ENCODE measurements at regions of chr2 and their contacts with region 1.

Region 1: DNA sequence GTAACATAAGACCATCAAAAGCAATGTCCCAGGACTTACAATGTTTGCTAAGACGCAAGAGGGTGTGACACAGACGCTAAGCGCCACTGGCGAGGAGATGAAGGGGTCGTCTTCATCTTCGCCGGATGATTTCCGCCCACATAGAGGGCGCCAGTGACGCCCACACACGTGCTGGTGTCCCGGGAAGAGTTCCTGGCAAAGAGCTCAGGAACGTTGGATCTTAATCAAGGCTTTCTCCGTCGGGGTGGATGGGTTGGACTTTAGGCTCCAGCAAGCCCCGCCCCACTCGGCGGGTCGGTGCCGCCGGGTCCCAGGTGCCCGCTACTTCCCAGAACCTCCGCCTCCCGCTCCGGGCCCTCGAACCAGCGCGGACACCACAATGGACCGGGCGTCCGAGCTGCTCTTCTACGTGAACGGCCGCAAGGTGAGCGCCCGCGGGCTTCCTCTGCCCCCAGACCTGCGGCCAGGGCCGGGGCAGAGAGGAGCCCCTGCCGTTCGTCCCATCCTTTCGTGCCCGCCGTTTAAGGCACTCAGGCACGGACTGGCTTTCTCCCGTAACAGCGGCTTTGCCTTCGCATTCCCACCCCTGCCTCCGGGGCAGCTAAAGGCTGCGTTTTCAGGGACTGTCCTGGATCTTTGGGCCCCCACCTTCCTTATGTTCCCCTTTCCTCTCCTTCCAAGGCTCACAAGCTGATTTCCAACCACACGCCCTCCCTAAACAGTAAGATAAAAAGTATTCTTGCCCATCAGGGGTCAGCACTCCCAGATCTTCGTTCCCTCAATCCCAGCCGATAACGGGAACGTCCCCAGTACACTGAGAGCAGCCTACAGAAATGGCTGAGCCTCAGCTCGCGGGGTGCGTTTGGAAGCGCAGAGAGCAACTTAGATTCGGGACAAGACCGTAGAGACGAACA is at the start of gene AOX1:
- DNase-seq: peak; percentile 70
- ATAC-seq: peak; percentile 93
- H3K4me3 ChIP-seq: peak within 1 kb of the TSS; percentile 56 to 76 (median 57)
- H3K27ac ChIP-seq: peak within 1 kb of the TSS; percentile 39
- H3K4me1 ChIP-seq: peaks cover 37% of the 10 kb centered on the region
- H3K27me3 ChIP-seq: no peaks in the 10 kb centered on the region; a peak in 1 of 5 replicates
- CTCF ChIP-seq: peak; percentile 71
- EP300 ChIP-seq: no peak
- POLR2A ChIP-seq: peak; percentile 51 to 60
- RAD21 ChIP-seq: peak; percentile 73
- total RNA-seq, gene AOX1: 18.0 and 27.5 TPM in 2 replicates

Region 2: DNA sequence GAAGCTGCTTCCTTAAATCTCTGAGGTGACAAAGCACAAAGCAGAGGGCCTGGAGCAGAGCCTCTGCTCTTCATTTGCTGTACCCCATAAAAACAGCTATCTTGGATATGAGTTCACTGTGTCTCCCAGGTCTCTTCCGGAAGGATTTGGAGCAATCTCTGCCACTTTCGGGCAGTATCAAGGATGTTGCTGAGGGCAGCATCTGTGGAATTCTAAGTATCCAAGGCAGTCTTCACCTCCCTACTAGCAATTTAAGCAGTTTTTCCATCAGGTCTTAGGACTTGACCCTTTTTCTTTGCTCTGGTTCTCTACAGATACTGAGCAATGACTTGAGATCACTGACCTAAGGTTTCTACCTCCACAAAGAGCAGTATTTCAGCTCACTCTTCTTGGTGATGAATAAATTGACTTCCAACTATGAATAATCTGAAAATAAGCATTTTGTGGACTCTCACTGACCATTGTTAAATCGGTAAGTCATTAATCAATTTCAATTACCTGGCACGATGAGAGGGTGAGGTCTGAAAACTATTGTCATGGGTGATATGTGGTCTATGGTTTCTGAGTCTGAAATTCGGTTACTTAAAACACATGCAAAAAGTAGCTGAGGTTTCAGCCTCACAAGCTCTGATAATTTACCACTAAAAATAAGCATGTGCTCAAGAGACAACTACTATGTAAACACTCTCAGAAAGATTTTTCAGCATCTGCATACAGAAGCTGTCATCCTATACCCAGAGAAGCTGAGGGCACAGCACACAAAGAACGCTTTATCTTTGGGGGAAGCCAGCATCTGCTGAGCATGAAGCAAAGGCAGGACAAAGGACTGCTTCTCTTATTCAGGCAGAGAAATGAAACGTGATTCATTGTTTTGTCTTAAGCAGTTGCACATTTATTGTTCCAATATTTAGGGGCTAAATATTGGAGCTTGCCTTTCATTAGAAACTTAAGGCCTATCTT is 311.6 kb before region 1 on chr2:
- CTCF ChIA-PET with region 1: no interaction called
- POLR2A ChIA-PET with region 1: no interaction called
- in situ Hi-C with region 1: no loop called
- intact Hi-C with region 1: no loop called
- DNase-seq: peak; percentile 81
- ATAC-seq: peak; percentile 96
- H3K4me3 ChIP-seq: no peak overlapping the region
- H3K27ac ChIP-seq: no peak overlapping the region
- H3K4me1 ChIP-seq: peaks cover 46% of the 10 kb centered on the region
- H3K27me3 ChIP-seq: peaks cover 0 to 2% of the 10 kb centered on the region in 2 experiments; a peak in 1 of 5 replicates
- CTCF ChIP-seq: no peak
- EP300 ChIP-seq: peak in 1 of 2 experiments; percentile 30; a peak in 1 of 4 replicates
- POLR2A ChIP-seq: no peak
- RAD21 ChIP-seq: no peak

Region 3: GRCh38 chr2:200603982-200604381 is 18.0 kb after region 1 on chr2:
- CTCF ChIA-PET with region 1: no interaction called
- POLR2A ChIA-PET with region 1: interaction called, 73 read pairs
- in situ Hi-C with region 1: no loop called
- intact Hi-C with region 1: loop called (anchors 2 kb)
- DNase-seq: peak; percentile 90
- ATAC-seq: peak; percentile 95
- H3K4me3 ChIP-seq: no peak overlapping the region
- H3K27ac ChIP-seq: peak overlapping the region; percentile 53
- H3K4me1 ChIP-seq: peaks cover 21% of the 10 kb centered on the region
- H3K27me3 ChIP-seq: no peaks in the 10 kb centered on the region
- CTCF ChIP-seq: no peak
- EP300 ChIP-seq: peak; percentile 50 to 68; a peak in 3 of 4 replicates
- POLR2A ChIP-seq: no peak
- RAD21 ChIP-seq: no peak

Region 4: GRCh38 chr2:200624658-200625057 is 38.7 kb after region 1 on chr2:
- CTCF ChIA-PET with region 1: no interaction called
- POLR2A ChIA-PET with region 1: interaction called, 6 read pairs
- in situ Hi-C with region 1: no loop called
- intact Hi-C with region 1: loop called (anchors 5 kb)
- DNase-seq: peak; percentile 24
- ATAC-seq: no peak
- H3K4me3 ChIP-seq: no peak overlapping the region
- H3K27ac ChIP-seq: no peak overlapping the region
- H3K4me1 ChIP-seq: peaks cover 11% of the 10 kb centered on the region
- H3K27me3 ChIP-seq: no peaks in the 10 kb centered on the region
- CTCF ChIP-seq: no peak
- EP300 ChIP-seq: no peak
- POLR2A ChIP-seq: no peak
- RAD21 ChIP-seq: no peak

Region 5: GRCh38 chr2:200658278-200658864 is 72.4 kb after region 1 on chr2:
- CTCF ChIA-PET with region 1: no interaction called
- POLR2A ChIA-PET with region 1: interaction called, 5 read pairs
- in situ Hi-C with region 1: loop called (anchors 5 kb)
- intact Hi-C with region 1: no loop called
- DNase-seq: no peak
- ATAC-seq: 0 out of 3 replicates have a peak, but pooled peaks have one; percentile 38
- H3K4me3 ChIP-seq: no peak overlapping the region
- H3K27ac ChIP-seq: no peak overlapping the region
- H3K4me1 ChIP-seq: peaks cover 2% of the 10 kb centered on the region
- H3K27me3 ChIP-seq: no peaks in the 10 kb centered on the region
- CTCF ChIP-seq: peak; percentile 53
- EP300 ChIP-seq: no peak
- POLR2A ChIP-seq: no peak
- RAD21 ChIP-seq: no peak